Activated T-helper 2 cell treated with anti-CD3 and anti-CD28 coated beads, Interferon-gamma antibody, Interleukin-2, Interleukin-4, amounts not matched to agents 10 μg/mL and 5 μg/mL and 100 μg/mL, durations not matched to agents 14 hours and 24 hours and 36 hours (primary cell): ENCODE measurements at regions of chr7 and their contacts with region 1.

Region 1: GRCh38 chr7:12686894-12687717 is at the start of gene ARL4A:
- DNase-seq: peak; percentile 89
- H3K4me3 Mint-ChIP-seq: peak within 1 kb of the TSS; percentile 94
- H3K27ac Mint-ChIP-seq: peak within 1 kb of the TSS; percentile 98
- H3K4me1 Mint-ChIP-seq: peaks cover 33% of the 10 kb centered on the region
- H3K27me3 Mint-ChIP-seq: peaks cover 5% of the 10 kb centered on the region
- total RNA-seq, gene ARL4A: 13.8 and 14.8 TPM in 2 replicates

Region 2: DNA sequence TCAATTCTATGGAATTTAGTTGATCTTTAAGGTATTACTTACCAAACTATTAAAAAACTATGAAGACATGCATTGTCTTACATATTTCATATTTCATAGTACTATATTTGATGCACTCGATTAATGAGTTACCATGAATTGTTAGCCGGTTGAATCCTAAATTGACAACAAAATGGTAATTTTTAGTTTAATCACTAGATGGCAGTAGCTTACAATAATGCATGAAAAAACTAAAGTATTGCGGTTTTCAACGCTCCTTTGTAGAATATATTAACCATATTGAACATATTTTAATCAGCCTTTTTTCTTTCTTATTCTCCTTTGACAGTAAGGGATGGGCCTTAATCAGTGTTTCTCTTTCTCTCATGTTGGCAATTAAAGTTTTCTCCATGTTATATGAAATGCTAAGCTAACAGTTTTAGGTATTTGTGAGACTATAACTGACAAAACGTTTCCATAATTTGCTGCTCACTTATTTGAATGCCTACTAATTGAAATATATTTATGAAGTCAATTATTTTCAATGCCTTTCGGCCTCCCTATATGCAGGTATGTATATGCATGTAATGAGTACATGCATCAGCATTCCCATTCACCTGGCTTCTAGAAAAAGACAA is 48.1 kb before region 1 on chr7:
- intact Hi-C with region 1: loop called (anchors 2 kb)
- DNase-seq: no peak
- H3K4me3 Mint-ChIP-seq: no peak overlapping the region
- H3K27ac Mint-ChIP-seq: no peak overlapping the region
- H3K4me1 Mint-ChIP-seq: peaks cover 19% of the 10 kb centered on the region
- H3K27me3 Mint-ChIP-seq: peaks cover 4% of the 10 kb centered on the region

Region 3: DNA sequence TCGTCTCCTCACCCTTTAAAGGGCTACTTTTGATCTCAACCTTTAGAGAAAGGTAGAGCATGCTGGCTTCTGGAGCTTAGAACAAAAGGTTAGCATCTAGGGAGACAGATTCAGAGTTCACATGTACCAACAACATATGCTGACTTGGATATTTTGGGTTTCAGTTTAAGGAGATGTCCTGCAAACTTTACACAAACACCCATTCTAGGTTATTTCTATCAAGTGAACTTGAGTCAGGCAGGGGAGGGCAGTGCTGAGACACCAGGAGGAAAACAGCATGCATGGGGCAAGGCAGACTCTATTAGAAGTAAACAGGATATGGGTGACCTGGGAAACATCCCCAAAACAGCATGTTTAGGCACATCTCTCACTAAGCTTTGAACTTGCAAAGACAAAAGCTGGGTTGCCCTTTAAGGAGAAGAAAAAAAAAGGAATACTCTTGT is 44.1 kb after region 1 on chr7:
- intact Hi-C with region 1: loop called (anchors 2 kb)
- DNase-seq: no peak
- H3K4me3 Mint-ChIP-seq: peak overlapping the region; percentile 38
- H3K27ac Mint-ChIP-seq: peak overlapping the region; percentile 78
- H3K4me1 Mint-ChIP-seq: peaks cover 14% of the 10 kb centered on the region
- H3K27me3 Mint-ChIP-seq: no peaks in the 10 kb centered on the region

Region 4: GRCh38 chr7:12911053-12911452 is 223.9 kb after region 1 on chr7:
- intact Hi-C with region 1: loop called (anchors 5 kb)
- DNase-seq: no peak
- H3K4me3 Mint-ChIP-seq: no peak overlapping the region
- H3K27ac Mint-ChIP-seq: no peak overlapping the region
- H3K4me1 Mint-ChIP-seq: peaks cover 12% of the 10 kb centered on the region
- H3K27me3 Mint-ChIP-seq: no peaks in the 10 kb centered on the region

Region 5: GRCh38 chr7:13262929-13263530 is 575.9 kb after region 1 on chr7:
- intact Hi-C with region 1: loop called (anchors 5 kb)
- DNase-seq: no peak
- H3K4me3 Mint-ChIP-seq: no peak overlapping the region
- H3K27ac Mint-ChIP-seq: no peak overlapping the region
- H3K4me1 Mint-ChIP-seq: no peaks in the 10 kb centered on the region
- H3K27me3 Mint-ChIP-seq: no peaks in the 10 kb centered on the region